Tibial artery (tissue), 4 donors: ENCODE measurements at regions of chr5 and their contacts with region 1.

Region 1: DNA sequence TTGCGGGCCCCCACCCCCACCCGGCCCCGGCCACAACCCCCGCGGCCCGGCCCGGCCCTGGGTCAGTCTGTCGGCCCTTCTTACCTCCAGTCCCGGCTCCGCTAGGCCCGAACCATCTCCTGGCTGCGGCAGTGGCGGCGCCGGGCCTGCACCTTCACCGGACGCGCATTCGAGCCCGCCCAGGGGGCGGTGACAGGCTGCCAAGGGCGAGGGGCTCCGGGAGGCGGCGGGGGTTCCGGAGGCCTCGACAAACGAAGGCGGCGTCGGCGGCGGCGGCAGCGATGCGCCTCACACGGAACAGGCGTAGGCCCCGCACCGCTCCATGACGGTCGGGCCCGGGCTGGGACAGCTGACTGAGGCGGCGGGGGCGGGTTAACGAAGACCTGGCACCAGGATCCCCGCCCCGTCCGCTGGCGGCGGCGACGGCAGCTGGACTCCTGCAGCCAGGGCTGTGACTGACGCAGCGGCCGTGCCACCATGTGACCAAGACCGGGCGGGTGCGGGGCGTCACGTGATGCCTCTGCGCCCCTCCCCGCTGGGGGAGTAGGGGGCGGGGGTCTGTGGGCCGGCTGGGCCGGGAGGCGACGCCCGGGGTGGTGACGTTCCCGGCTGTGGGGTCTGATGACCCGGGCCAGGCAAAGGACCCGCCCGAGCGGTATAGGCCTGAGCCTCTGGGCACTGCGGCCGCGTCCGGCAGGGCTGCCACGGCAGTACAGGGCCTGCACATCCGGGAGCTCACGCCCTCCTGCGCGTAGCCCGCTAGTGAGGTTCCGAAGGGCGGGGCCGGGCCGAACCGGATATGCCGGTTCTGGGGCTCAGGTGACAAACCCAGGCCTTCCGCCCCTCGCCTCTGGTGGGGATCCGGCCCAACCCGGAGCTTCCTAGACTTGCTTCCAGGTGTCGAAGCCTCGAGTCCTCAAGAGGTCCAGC is at the start of gene AFF4:
- DNase-seq: peak; percentile 96 to 98
- H3K4me3 ChIP-seq: peak within 1 kb of the TSS; percentile 70 to 91
- H3K27ac ChIP-seq: peak within 1 kb of the TSS; percentile 99
- H3K4me1 ChIP-seq: peaks cover 0 to 42% (median 24%) of the 10 kb centered on the region in 4 donors
- H3K27me3 ChIP-seq: no peaks in the 10 kb centered on the region
- CTCF ChIP-seq: peak in 1 of 2 experiments; percentile 19

Region 2: DNA sequence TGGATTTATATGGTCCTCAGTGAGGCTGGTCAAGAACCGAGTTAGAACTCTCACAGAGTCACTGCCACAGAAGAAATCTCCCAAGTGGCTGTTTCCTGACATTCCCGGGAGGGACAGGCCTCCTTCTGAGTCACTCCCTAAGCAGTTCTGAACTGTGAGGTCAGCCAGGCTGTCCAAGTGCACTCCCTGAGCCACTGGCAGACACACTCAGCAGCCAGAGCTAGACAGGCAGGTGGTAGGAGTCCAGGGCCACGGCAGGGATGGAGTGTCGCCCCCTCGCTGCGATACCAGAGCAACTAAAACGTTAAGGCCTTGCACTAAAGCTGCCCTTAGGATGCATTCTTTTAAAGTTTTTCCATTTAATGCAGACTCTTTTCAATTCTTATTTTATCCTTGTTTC is 286.2 kb before region 1 on chr5:
- intact Hi-C with region 1: no loop called
- DNase-seq: peak; percentile 63 to 91
- H3K4me3 ChIP-seq: no peak overlapping the region
- H3K27ac ChIP-seq: peak overlapping the region; percentile 51 to 82
- H3K4me1 ChIP-seq: peaks cover 0 to 46% (median 23%) of the 10 kb centered on the region in 4 donors
- H3K27me3 ChIP-seq: no peaks in the 10 kb centered on the region
- CTCF ChIP-seq: peak; percentile 49 to 56

Region 3: GRCh38 chr5:132877938-132878337 is 85.5 kb before region 1 on chr5:
- intact Hi-C with region 1: no loop called
- DNase-seq: no peak
- H3K4me3 ChIP-seq: no peak overlapping the region
- H3K27ac ChIP-seq: no peak overlapping the region
- H3K4me1 ChIP-seq: peaks cover 0 to 23% (median 3%) of the 10 kb centered on the region in 4 donors
- H3K27me3 ChIP-seq: no peaks in the 10 kb centered on the region
- CTCF ChIP-seq: no peak

Region 4: GRCh38 chr5:132947671-132948070 is 15.8 kb before region 1 on chr5:
- intact Hi-C with region 1: no loop called
- DNase-seq: no peak
- H3K4me3 ChIP-seq: no peak overlapping the region
- H3K27ac ChIP-seq: no peak overlapping the region
- H3K4me1 ChIP-seq: peaks cover 0 to 87% (median 32%) of the 10 kb centered on the region in 4 donors
- H3K27me3 ChIP-seq: no peaks in the 10 kb centered on the region
- CTCF ChIP-seq: no peak

Region 5: DNA sequence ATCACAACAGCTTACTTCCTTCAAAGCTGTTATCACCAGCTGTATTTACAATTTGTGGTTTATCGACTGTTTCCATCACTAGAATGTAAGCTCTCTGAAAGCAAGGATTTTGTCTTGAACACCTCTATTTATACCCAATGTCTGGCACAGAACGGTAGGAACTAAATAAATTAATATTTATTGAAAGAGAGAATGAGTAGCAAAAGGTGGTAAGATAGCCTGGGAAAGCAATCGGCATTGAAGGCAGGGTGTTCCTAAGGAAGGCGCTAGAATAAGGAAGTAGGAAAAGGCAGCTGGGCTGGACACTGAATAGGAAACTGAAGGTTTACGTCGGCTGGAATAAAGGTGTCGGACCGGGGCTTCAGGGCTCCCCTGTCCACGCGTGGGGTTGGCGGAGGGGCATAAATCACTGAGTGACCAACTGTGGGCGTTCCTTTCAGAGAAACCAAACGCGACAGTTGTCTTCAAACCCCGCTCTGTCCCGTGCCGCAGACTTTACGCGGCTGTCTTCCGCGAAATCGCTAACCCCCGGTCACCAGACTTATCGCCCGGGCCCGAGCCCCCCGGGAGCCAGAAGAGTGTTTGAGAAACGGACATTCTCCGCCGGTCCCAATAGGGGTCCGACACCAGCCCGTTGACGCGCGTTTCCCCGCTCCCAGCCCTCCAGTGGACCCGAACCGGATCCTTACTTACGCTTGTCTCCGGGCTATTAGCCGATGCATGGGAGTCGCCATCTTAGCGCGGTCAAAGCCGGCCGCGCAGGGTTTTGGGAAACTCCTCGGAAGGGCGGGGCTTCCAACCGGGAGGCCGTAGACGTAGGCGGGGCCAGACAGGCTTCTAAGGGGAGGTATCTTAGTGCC is 62.6 kb after region 1 on chr5 and contains the start of gene ZCCHC10:
- intact Hi-C with region 1: loop called (anchors 10 kb)
- DNase-seq: peak; percentile 93 to 96
- H3K4me3 ChIP-seq: peak within 1 kb of the TSS; percentile 93 to 96
- H3K27ac ChIP-seq: peak within 1 kb of the TSS; percentile 97 to 99
- H3K4me1 ChIP-seq: peaks cover 0 to 42% (median 11%) of the 10 kb centered on the region in 4 donors
- H3K27me3 ChIP-seq: no peaks in the 10 kb centered on the region
- CTCF ChIP-seq: no peak

Region 6: GRCh38 chr5:133051580-133052332 is 88.3 kb after region 1 on chr5 and contains the start of gene HSPA4:
- intact Hi-C with region 1: loop called (anchors 2 kb)
- DNase-seq: peak; percentile 97 to 98
- H3K4me3 ChIP-seq: peak within 1 kb of the TSS; percentile 84 to 98
- H3K27ac ChIP-seq: peak within 1 kb of the TSS; percentile 94 to 98
- H3K4me1 ChIP-seq: peaks cover 0 to 77% (median 41%) of the 10 kb centered on the region in 4 donors
- H3K27me3 ChIP-seq: no peaks in the 10 kb centered on the region
- CTCF ChIP-seq: no peak

Region 7: GRCh38 chr5:133723651-133724366 is 760.4 kb after region 1 on chr5:
- intact Hi-C with region 1: no loop called
- DNase-seq: peak in 1 of 2 donors; percentile 28
- H3K4me3 ChIP-seq: no peak overlapping the region
- H3K27ac ChIP-seq: no peak overlapping the region
- H3K4me1 ChIP-seq: no peaks in the 10 kb centered on the region
- H3K27me3 ChIP-seq: no peaks in the 10 kb centered on the region
- CTCF ChIP-seq: no peak